Activated T-helper 2 cell treated with anti-CD3 and anti-CD28 coated beads, Interferon-gamma antibody, Interleukin-2, Interleukin-4, amounts not matched to agents 10 μg/mL and 5 μg/mL and 100 μg/mL, durations not matched to agents 14 hours and 24 hours and 36 hours (primary cell): ENCODE measurements at regions of chr18 and their contacts with region 1.

Region 1: GRCh38 chr18:45879681-45880655 is 54.5 kb downstream of the SIGLEC15 start:
- DNase-seq: peak; percentile 52
- H3K4me3 Mint-ChIP-seq: no peak overlapping the region
- H3K27ac Mint-ChIP-seq: no peak overlapping the region
- H3K4me1 Mint-ChIP-seq: peaks cover 12% of the 10 kb centered on the region
- H3K27me3 Mint-ChIP-seq: no peaks in the 10 kb centered on the region

Region 2: GRCh38 chr18:45722899-45723298 is 157.1 kb before region 1 on chr18:
- intact Hi-C with region 1: loop called (anchors 1 kb)
- DNase-seq: peak; percentile 58
- H3K4me3 Mint-ChIP-seq: no peak overlapping the region
- H3K27ac Mint-ChIP-seq: no peak overlapping the region
- H3K4me1 Mint-ChIP-seq: peaks cover 4% of the 10 kb centered on the region
- H3K27me3 Mint-ChIP-seq: peaks cover 16% of the 10 kb centered on the region

Region 3: DNA sequence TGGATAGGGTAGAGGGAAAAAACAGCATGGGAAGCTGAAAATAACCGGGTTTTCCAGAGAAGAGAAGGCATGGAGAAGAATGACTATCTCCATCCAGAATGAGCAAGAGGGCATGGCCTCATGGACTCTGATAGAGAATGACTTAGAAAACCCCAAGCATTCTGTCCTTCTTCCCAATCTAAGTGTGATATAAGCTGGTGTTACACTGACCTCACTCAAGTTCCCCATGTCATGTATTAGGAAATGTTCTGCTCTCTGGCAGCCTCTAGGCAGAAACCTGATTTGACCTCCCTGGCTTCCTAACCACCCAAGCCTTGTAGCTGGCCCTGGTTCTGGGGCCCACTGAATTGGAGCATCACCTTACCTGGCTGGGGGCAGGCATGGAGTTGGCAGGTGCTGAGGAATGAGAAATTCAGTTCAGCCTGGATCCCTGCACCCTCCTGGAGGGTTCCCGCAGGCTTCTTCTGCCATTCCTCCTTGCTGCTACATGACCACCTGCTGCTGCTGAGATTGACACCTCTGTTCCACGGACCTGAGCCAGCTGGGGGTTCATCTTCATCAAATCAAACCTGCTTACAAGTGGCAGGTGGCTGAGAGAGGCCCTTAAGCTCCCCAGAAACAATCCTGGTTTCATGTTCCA is 59.7 kb before region 1 on chr18:
- intact Hi-C with region 1: no loop called
- DNase-seq: no peak
- H3K4me3 Mint-ChIP-seq: no peak overlapping the region
- H3K27ac Mint-ChIP-seq: no peak overlapping the region
- H3K4me1 Mint-ChIP-seq: peaks cover 3% of the 10 kb centered on the region
- H3K27me3 Mint-ChIP-seq: peaks cover 44% of the 10 kb centered on the region